H1 (cell line): ENCODE measurements at regions of chr9 and their contacts with region 1.

Region 1: GRCh38 chr9:137029058-137029936 is 1.3 kb upstream of the ABCA2 start:
- DNase-seq: peak in 1 of 2 experiments; percentile 98
- H3K4me3 ChIP-seq: peak overlapping the region in 1 of 4 experiments; percentile 78; a peak in 4 of 8 replicates
- H3K27ac ChIP-seq: no peak overlapping the region
- H3K4me1 ChIP-seq: peaks cover 0 to 11% (median 3%) of the 10 kb centered on the region in 4 experiments; a peak in 5 of 7 replicates
- H3K27me3 ChIP-seq: peaks cover 1 to 27% (median 15%) of the 10 kb centered on the region in 4 experiments; a peak in 6 of 7 replicates
- CTCF ChIP-seq: peak in 2 of 3 experiments; percentile 94 to 98; a peak in 3 of 4 replicates
- EP300 ChIP-seq: no peak
- POLR2A ChIP-seq: no peak
- RAD21 ChIP-seq: peak; percentile 42 to 64

Region 2: DNA sequence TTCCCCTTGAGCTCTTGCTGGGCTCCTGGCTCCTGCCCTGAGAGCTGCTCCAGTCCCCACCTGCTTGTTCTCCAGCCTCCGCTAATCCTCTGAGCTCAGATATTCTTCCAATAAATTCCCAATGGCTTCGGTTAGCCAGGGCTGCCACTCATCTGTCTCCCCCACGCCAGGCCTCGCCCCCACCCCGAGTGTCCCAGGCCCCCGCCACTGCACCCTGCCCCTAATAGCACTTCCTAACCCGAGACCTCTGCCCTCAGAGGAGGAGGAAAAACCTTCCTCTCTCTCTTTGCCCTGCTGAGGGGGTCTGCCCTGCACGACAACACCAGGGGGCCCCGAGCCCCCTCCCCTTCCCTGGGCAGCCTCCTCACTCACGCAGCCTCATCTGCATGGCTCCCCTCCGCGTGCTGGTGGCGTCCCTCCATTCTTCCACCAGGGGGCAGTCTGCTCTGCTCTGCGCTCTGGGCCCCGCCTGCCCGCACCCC is 259.5 kb before region 1 on chr9:
- CTCF ChIA-PET with region 1: no interaction called
- POLR2A ChIA-PET with region 1: no interaction called
- DNase-seq: peak in 1 of 2 experiments; percentile 88
- H3K4me3 ChIP-seq: peak overlapping the region in 2 of 4 experiments; percentile 20 to 56; a peak in 3 of 8 replicates
- H3K27ac ChIP-seq: no peak overlapping the region
- H3K4me1 ChIP-seq: no peaks in the 10 kb centered on the region
- H3K27me3 ChIP-seq: no peaks in the 10 kb centered on the region
- CTCF ChIP-seq: peak; percentile 57 to 93 (median 72)
- EP300 ChIP-seq: no peak
- POLR2A ChIP-seq: no peak
- RAD21 ChIP-seq: peak in 1 of 2 experiments; percentile 11; a peak in 2 of 4 replicates

Region 3: GRCh38 chr9:136875159-136875559 is 154.1 kb before region 1 on chr9:
- CTCF ChIA-PET with region 1: no interaction called
- POLR2A ChIA-PET with region 1: no interaction called
- DNase-seq: no peak
- H3K4me3 ChIP-seq: no peak overlapping the region
- H3K27ac ChIP-seq: no peak overlapping the region
- H3K4me1 ChIP-seq: no peaks in the 10 kb centered on the region
- H3K27me3 ChIP-seq: no peaks in the 10 kb centered on the region
- CTCF ChIP-seq: no peak
- EP300 ChIP-seq: no peak
- POLR2A ChIP-seq: no peak
- RAD21 ChIP-seq: no peak

Region 4: GRCh38 chr9:136965771-136966484 is 63.4 kb before region 1 on chr9:
- CTCF ChIA-PET with region 1: interaction called, 38 read pairs
- POLR2A ChIA-PET with region 1: no interaction called
- DNase-seq: no peak
- H3K4me3 ChIP-seq: no peak overlapping the region
- H3K27ac ChIP-seq: no peak overlapping the region
- H3K4me1 ChIP-seq: peaks cover 0 to 7% (median 5%) of the 10 kb centered on the region in 4 experiments; a peak in 4 of 7 replicates
- H3K27me3 ChIP-seq: no peaks in the 10 kb centered on the region
- CTCF ChIP-seq: no peak
- EP300 ChIP-seq: no peak
- POLR2A ChIP-seq: no peak
- RAD21 ChIP-seq: no peak

Region 5: DNA sequence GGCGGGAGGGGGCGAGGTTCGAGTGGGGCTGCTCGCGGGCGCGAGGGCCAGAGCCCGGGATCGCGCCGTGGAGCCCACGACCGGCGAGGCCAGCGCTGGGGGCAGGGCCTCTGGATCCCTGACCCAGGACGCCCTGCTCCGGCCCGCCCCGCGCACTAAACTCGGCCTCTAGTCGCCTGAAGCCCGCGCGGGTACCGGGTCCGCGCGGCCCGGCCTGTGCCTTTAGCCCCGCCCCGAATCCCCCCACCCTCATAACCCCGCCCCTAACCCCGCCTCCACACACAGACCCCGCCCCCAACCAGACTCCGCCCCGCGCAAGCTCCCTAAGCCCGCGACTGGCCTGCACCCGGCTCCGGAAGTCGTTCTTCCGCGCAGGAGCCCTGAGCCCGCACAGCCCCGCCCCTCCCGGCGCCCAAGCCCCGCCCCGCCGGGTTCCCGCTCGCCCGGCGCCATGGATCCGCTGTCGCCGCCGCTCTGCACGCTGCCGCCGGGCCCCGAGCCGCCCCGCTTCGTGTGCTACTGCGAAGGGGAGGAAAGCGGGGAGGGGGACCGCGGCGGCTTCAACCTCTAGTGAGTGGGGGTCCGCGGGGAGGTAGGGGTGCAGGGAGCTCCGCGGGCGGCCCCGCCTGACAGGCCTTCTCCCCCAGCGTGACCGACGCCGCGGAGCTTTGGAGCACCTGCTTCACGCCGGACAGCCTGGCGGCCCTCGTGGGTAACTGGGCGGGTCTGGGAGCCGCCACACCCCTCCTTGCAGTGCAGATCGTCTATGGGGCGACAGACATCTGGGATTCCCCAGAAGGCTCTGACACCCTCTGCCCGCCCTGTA is 37.1 kb before region 1 on chr9 and contains the start of gene PAXX:
- CTCF ChIA-PET with region 1: interaction called, 29 read pairs
- POLR2A ChIA-PET with region 1: interaction called, 3 read pairs
- DNase-seq: peak; percentile 65 to 96
- H3K4me3 ChIP-seq: peak within 1 kb of the TSS; percentile 46 to 89 (median 74)
- H3K27ac ChIP-seq: peak within 1 kb of the TSS; percentile 3; the same call in 1 of the 2 replicates
- H3K4me1 ChIP-seq: peaks cover 0 to 16% (median 7%) of the 10 kb centered on the region in 4 experiments; a peak in 6 of 7 replicates
- H3K27me3 ChIP-seq: peaks cover 0 to 17% (median 12%) of the 10 kb centered on the region in 4 experiments; a peak in 3 of 7 replicates
- CTCF ChIP-seq: no peak
- EP300 ChIP-seq: no peak
- POLR2A ChIP-seq: no peak; a peak in 1 of 3 replicates
- RAD21 ChIP-seq: no peak
- total RNA-seq, gene PAXX: 40.8 and 43.4 TPM in 2 replicates

Region 6: GRCh38 chr9:137012694-137013584 is 16.4 kb before region 1 on chr9:
- CTCF ChIA-PET with region 1: interaction called, 54 read pairs
- POLR2A ChIA-PET with region 1: interaction called, 3 read pairs
- DNase-seq: peak in 1 of 2 experiments; percentile 64
- H3K4me3 ChIP-seq: no peak overlapping the region
- H3K27ac ChIP-seq: no peak overlapping the region
- H3K4me1 ChIP-seq: peaks cover 0 to 5% (median under 1%) of the 10 kb centered on the region in 4 experiments; a peak in 2 of 7 replicates
- H3K27me3 ChIP-seq: no peaks in the 10 kb centered on the region; a peak in 1 of 7 replicates
- CTCF ChIP-seq: no peak
- EP300 ChIP-seq: no peak
- POLR2A ChIP-seq: no peak
- RAD21 ChIP-seq: no peak

Region 7: GRCh38 chr9:137046098-137046787 is 16.9 kb after region 1 on chr9 and contains the start of gene NPDC1:
- CTCF ChIA-PET with region 1: interaction called, 27 read pairs
- POLR2A ChIA-PET with region 1: interaction called, 5 read pairs
- DNase-seq: peak; percentile 59 to 99
- H3K4me3 ChIP-seq: peak within 1 kb of the TSS; percentile 38 to 62 (median 56)
- H3K27ac ChIP-seq: no peak within 1 kb of the TSS
- H3K4me1 ChIP-seq: peaks cover 3 to 14% (median 8%) of the 10 kb centered on the region in 4 experiments; a peak in 6 of 7 replicates
- H3K27me3 ChIP-seq: peaks cover 17 to 51% (median 37%) of the 10 kb centered on the region in 4 experiments
- CTCF ChIP-seq: peak in 2 of 3 experiments; percentile 85 to 94; a peak in 3 of 4 replicates
- EP300 ChIP-seq: peak in 1 of 2 experiments; percentile 56; a peak in 1 of 3 replicates
- POLR2A ChIP-seq: no peak
- RAD21 ChIP-seq: peak; percentile 63 to 76
- total RNA-seq, gene NPDC1: 41.9 and 44.1 TPM in 2 replicates

Region 8: DNA sequence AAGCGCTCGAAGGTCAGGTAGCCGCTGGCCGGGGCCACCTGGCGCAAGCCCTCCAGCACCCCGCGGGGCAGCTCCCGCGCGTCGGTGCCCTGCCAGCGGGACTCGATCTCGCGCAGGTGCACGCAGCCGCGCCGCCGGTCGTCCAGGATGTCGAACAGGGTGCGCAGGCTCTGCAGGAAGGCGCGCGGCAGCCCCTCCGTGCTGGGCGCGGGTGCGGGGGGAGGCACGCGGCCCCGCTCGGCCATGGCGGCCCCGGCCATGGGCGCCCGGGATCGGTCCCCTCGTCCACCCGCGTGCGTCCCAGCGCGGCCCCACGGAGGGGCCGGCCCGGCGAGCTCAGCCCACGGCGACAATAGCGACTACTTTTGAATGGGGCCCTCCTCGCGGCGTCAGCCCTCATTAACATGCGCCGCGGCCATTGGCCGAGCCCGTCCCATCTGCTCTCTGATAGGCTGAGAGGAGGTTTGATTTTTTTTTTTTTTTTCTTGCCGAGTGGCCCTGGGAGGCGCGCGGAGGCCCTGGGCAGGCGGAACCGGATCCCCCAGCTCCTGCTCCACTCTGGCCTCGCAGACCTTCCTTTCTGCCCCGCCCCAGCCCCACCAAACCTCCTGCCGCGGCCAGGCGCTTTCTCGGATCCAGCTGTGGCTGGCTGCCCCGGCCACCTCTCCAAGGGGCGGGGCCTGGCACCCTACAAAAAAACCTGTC is 41.1 kb after region 1 on chr9 and contains the start of gene SAPCD2:
- CTCF ChIA-PET with region 1: interaction called, 110 read pairs
- POLR2A ChIA-PET with region 1: interaction called, 6 read pairs
- DNase-seq: peak; percentile 75 to 84
- H3K4me3 ChIP-seq: peak within 1 kb of the TSS; percentile 46 to 64 (median 48)
- H3K27ac ChIP-seq: no peak within 1 kb of the TSS; the same call in 1 of the 2 replicates
- H3K4me1 ChIP-seq: peaks cover 0 to 27% (median 21%) of the 10 kb centered on the region in 4 experiments; a peak in 6 of 7 replicates
- H3K27me3 ChIP-seq: peaks cover 0 to 18% (median 7%) of the 10 kb centered on the region in 4 experiments; a peak in 5 of 7 replicates
- CTCF ChIP-seq: no peak
- EP300 ChIP-seq: 0 out of 3 replicates have a peak, but pooled peaks of 1 of the 2 experiments have one; percentile 18
- POLR2A ChIP-seq: peak in 1 of 2 experiments; percentile 49; a peak in 1 of 3 replicates
- RAD21 ChIP-seq: no peak
- total RNA-seq, gene SAPCD2: 30.3 and 32.1 TPM in 2 replicates